Activated CD4-positive, alpha-beta memory T cell treated with anti-CD3 and anti-CD28 coated beads, Interleukin-2, amount 10 ng/mL, durations not matched to agents 7 days and 5 days (primary cell): ENCODE measurements at regions of chr11 and their contacts with region 1.

Region 1: DNA sequence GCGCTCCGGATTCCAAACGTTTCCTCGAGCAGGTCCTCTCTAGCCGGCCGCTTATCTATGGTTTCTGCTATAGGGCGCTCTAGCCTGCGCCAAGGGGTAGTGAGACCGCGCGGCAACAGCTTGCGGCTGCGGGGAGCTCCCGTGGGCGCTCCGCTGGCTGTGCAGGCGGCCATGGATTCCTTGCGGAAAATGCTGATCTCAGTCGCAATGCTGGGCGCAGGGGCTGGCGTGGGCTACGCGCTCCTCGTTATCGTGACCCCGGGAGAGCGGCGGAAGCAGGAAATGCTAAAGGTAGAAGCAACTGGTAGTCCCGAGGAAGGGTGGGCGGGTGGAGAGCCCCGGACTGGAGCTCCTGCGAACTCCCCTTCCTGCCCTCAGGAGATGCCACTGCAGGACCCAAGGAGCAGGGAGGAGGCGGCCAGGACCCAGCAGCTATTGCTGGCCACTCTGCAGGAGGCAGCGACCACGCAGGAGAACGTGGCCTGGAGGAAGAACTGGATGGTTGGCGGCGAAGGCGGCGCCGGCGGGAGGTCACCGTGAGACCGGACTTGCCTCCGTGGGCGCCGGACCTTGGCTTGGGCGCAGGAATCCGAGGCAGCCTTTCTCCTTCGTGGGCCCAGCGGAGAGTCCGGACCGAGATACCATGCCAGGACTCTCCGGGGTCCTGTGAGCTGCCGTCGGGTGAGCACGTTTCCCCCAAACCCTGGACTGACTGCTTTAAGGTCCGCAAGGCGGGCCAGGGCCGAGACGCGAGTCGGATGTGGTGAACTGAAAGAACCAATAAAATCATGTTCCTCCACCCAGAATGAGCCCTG is at the starts of genes LBHD1 and UQCC3:
- DNase-seq: peak; percentile 91
- H3K4me3 Mint-ChIP-seq: peak within 1 kb of the TSS; percentile 91
- H3K27ac Mint-ChIP-seq: peak within 1 kb of the TSS; percentile 91
- H3K4me1 Mint-ChIP-seq: peaks cover 68% of the 10 kb centered on the region
- H3K27me3 Mint-ChIP-seq: no peaks in the 10 kb centered on the region
- total RNA-seq, gene LBHD1: 17.2 to 18.3 TPM
- total RNA-seq, gene UQCC3: 7.9 to 8.2 TPM

Region 2: GRCh38 chr11:62472012-62472884 is 199.5 kb before region 1 on chr11:
- CTCF ChIA-PET with region 1: no interaction called
- POLR2A ChIA-PET with region 1: no interaction called
- DNase-seq: no peak
- H3K4me3 Mint-ChIP-seq: no peak overlapping the region
- H3K27ac Mint-ChIP-seq: peak overlapping the region; percentile 36
- H3K4me1 Mint-ChIP-seq: peaks cover 7% of the 10 kb centered on the region
- H3K27me3 Mint-ChIP-seq: no peaks in the 10 kb centered on the region

Region 3: DNA sequence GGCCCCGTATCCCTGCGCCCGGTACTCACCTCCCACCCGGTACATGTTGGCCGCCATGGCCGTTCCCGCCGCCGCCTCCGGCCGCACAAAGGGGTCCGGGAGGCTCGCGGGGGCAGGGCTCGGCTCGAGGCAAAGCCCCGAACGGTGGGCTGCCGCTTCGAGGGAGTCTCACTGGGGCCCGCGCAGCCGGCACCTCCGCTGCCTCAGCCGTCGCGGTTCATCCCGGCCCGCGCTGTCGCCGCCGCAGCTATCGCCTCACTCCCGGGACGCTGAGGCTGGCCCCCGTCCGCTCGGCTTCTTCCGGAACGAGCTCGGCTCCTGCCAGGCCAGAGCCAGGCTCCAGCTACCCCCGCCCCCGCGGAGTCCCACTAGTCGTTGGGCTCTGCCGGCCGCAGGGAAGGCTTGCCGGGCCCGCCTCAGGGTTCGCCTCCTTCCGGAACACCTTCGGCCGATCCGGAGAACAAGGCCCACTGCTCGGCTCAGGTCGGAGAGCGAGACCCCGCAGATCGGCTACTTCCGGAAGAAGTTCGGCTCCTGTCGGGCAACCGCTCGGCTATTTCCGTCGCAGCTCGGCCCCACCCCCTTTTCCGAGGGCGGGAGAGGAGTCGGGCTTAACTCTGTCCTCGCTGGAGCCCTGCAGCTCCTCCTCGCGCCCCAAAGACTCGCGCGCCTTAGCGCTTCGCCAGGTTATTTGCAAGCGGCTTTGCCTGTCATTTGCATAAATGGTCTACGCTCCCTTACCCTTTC is 70.2 kb before region 1 on chr11 and contains the start of gene MTA2:
- CTCF ChIA-PET with region 1: interaction called, 3 read pairs
- POLR2A ChIA-PET with region 1: interaction called, 34 read pairs
- DNase-seq: peak; percentile 100
- H3K4me3 Mint-ChIP-seq: peak within 1 kb of the TSS; percentile 85
- H3K27ac Mint-ChIP-seq: peak within 1 kb of the TSS; percentile 88
- H3K4me1 Mint-ChIP-seq: peaks cover 53% of the 10 kb centered on the region
- H3K27me3 Mint-ChIP-seq: no peaks in the 10 kb centered on the region
- total RNA-seq, gene MTA2: 226 TPM

Region 4: DNA sequence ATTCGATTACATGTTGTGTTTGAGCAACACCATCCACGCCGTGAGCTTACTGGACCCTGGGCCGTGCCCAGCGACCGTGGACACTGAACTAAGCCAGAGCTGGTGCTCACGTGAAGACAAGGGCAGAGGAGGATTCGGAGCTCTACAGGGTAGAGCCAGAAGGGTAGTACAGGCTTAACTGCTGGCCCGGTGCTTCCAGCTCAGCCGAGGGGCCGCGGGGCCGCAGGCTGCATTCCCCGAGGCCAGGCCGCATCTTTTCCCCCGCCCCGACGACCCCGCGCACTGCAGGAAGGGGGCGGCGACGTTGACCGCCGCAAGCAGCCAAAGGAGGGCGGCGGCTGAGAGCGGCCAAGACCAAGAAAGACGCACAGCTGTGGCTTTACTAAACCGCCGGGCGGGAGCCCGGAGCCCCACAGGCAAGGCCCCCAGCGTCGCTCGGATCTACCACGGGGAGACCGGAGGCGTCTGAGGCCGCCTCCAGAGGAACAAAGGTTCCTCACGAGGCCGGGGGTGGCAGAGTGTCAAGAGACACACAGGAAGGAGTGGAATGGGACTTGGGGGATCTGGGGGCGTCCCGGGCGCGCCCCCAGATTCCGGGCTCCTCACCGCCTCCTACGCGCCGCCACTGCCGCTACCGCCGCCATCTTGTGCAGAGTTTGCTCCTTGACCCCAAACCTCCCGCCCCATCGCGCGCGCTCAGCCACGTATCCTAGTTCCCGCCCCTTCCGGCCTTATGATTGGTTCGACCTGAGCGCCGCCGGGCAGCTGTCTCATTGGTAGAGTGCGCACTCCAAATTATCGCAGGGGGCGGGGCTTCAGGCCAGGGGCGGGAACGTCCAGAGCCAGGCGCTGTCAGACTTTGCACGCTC is 25.6 kb before region 1 on chr11 and contains the start of gene GANAB:
- CTCF ChIA-PET with region 1: no interaction called
- POLR2A ChIA-PET with region 1: interaction called, 192 read pairs
- DNase-seq: peak; percentile 99
- H3K4me3 Mint-ChIP-seq: peak within 1 kb of the TSS; percentile 99
- H3K27ac Mint-ChIP-seq: peak within 1 kb of the TSS; percentile 94
- H3K4me1 Mint-ChIP-seq: peaks cover 47% of the 10 kb centered on the region
- H3K27me3 Mint-ChIP-seq: no peaks in the 10 kb centered on the region
- total RNA-seq, gene GANAB: 278 to 284 TPM

Region 5: GRCh38 chr11:62694455-62695167 is 22.8 kb after region 1 on chr11:
- CTCF ChIA-PET with region 1: interaction called, 13 read pairs
- POLR2A ChIA-PET with region 1: interaction called, 10 read pairs
- DNase-seq: peak; percentile 79
- H3K4me3 Mint-ChIP-seq: no peak overlapping the region
- H3K27ac Mint-ChIP-seq: no peak overlapping the region
- H3K4me1 Mint-ChIP-seq: peaks cover 7% of the 10 kb centered on the region
- H3K27me3 Mint-ChIP-seq: no peaks in the 10 kb centered on the region

Region 6: DNA sequence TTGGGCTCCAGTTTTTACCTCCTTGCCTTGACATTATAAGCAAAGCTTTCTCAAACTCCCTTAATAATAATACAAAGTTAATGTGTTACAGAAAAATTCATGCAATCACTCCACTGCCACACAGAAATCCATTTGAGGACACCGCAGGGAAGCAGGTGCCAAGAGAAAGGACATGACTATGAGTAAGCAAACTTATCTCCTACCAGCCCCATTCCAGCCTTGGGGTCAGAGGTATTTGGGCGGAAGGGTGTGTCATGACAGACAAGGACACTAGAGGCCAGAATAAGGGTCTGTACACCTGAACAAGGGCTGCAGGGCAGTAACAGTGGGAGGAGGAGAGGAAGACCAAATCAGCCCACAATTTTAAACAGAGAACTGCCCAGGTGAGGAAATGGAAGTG is 41.6 kb after region 1 on chr11:
- CTCF ChIA-PET with region 1: no interaction called
- POLR2A ChIA-PET with region 1: interaction called, 61 read pairs
- DNase-seq: no peak
- H3K4me3 Mint-ChIP-seq: peak overlapping the region; percentile 47
- H3K27ac Mint-ChIP-seq: peak overlapping the region; percentile 93
- H3K4me1 Mint-ChIP-seq: peaks cover 78% of the 10 kb centered on the region
- H3K27me3 Mint-ChIP-seq: no peaks in the 10 kb centered on the region

Region 7: DNA sequence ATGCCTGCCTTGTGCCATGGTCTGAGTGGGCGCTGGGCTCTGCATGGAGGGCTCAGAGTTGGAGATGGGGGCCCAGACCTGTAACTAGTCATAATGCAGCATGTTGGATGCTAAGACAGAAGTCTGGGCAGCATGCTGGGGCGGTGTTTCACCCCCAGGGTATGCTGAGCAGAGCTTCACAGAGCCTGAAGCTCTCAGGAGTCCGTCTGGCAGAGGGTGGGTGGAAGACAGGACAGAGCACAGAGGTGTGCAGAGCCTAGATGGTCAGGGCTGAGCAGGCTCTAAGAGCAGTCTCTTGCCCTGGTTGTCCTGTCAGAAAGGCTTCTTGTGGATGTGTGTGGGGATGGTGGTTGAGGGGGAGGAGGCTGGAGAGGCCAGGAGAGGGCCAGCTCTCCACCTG is 106.7 kb after region 1 on chr11:
- CTCF ChIA-PET with region 1: no interaction called
- POLR2A ChIA-PET with region 1: no interaction called
- DNase-seq: no peak
- H3K4me3 Mint-ChIP-seq: no peak overlapping the region
- H3K27ac Mint-ChIP-seq: peak overlapping the region; percentile 42
- H3K4me1 Mint-ChIP-seq: peaks cover 13% of the 10 kb centered on the region
- H3K27me3 Mint-ChIP-seq: no peaks in the 10 kb centered on the region